OCI-LY7 (cell line): ENCODE measurements at regions of chr13 and their contacts with region 1.

Region 1: GRCh38 chr13:48818495-48819031 is 157.1 kb upstream of the FNDC3A start:
- DNase-seq: no peak
- H3K4me3 ChIP-seq: no peak overlapping the region
- H3K27ac ChIP-seq: no peak overlapping the region
- H3K4me1 ChIP-seq: no peaks in the 10 kb centered on the region
- CTCF ChIP-seq: no peak

Region 2: GRCh38 chr13:48828962-48829421 is 10.4 kb after region 1 on chr13:
- CTCF ChIA-PET with region 1: no interaction called
- POLR2A ChIA-PET with region 1: interaction called, 5 read pairs
- intact Hi-C with region 1: loop called (anchors 2 kb)
- DNase-seq: peak; percentile 50
- H3K4me3 ChIP-seq: peak overlapping the region; percentile 17
- H3K27ac ChIP-seq: peak overlapping the region; percentile 26
- H3K4me1 ChIP-seq: peaks cover 20% of the 10 kb centered on the region
- CTCF ChIP-seq: no peak